GM12878 (cell line): ENCODE measurements at regions of chr6 and their contacts with region 1.

Region 1: GRCh38 chr6:100001915-100002388 is 7.9 kb upstream of the MCHR2 start:
- DNase-seq: no peak
- ATAC-seq: peak; percentile 95
- H3K4me3 ChIP-seq: no peak overlapping the region
- H3K27ac ChIP-seq: no peak overlapping the region
- H3K4me1 ChIP-seq: no peaks in the 10 kb centered on the region
- H3K27me3 ChIP-seq: peaks cover 0 to 4% of the 10 kb centered on the region in 2 experiments; a peak in 1 of 4 replicates
- CTCF ChIP-seq: peak; percentile 87 to 93 (median 91)
- EP300 ChIP-seq: no peak
- POLR2A ChIP-seq: no peak
- RAD21 ChIP-seq: peak; percentile 76

Region 2: GRCh38 chr6:100093405-100093804 is 91.5 kb after region 1 on chr6:
- CTCF ChIA-PET with region 1: interaction called, 103 read pairs
- POLR2A ChIA-PET with region 1: no interaction called
- RAD21 ChIA-PET with region 1: interaction called, 33 read pairs
- SMC1A ChIA-PET with region 1: interaction called, 53 read pairs
- in situ Hi-C with region 1: loop called (anchors 5 kb)
- intact Hi-C with region 1: no loop called
- DNase-seq: no peak
- ATAC-seq: no peak
- H3K4me3 ChIP-seq: no peak overlapping the region
- H3K27ac ChIP-seq: no peak overlapping the region
- H3K4me1 ChIP-seq: no peaks in the 10 kb centered on the region
- H3K27me3 ChIP-seq: no peaks in the 10 kb centered on the region
- CTCF ChIP-seq: no peak
- EP300 ChIP-seq: no peak
- POLR2A ChIP-seq: no peak
- RAD21 ChIP-seq: no peak

Region 3: GRCh38 chr6:100099189-100100074 is 97.5 kb after region 1 on chr6:
- CTCF ChIA-PET with region 1: interaction called, 103 read pairs
- POLR2A ChIA-PET with region 1: no interaction called
- RAD21 ChIA-PET with region 1: interaction called, 33 read pairs
- SMC1A ChIA-PET with region 1: interaction called, 53 read pairs
- in situ Hi-C with region 1: loop called (anchors 5 kb)
- intact Hi-C with region 1: loop called (anchors 1 kb)
- DNase-seq: no peak
- ATAC-seq: peak; percentile 66
- H3K4me3 ChIP-seq: no peak overlapping the region
- H3K27ac ChIP-seq: no peak overlapping the region
- H3K4me1 ChIP-seq: no peaks in the 10 kb centered on the region
- H3K27me3 ChIP-seq: no peaks in the 10 kb centered on the region
- CTCF ChIP-seq: peak in 2 of 3 experiments; percentile 23 to 45; a peak in 4 of 6 replicates
- EP300 ChIP-seq: no peak
- POLR2A ChIP-seq: no peak
- RAD21 ChIP-seq: peak; percentile 42; the same call in 1 of the 2 replicates

Region 4: DNA sequence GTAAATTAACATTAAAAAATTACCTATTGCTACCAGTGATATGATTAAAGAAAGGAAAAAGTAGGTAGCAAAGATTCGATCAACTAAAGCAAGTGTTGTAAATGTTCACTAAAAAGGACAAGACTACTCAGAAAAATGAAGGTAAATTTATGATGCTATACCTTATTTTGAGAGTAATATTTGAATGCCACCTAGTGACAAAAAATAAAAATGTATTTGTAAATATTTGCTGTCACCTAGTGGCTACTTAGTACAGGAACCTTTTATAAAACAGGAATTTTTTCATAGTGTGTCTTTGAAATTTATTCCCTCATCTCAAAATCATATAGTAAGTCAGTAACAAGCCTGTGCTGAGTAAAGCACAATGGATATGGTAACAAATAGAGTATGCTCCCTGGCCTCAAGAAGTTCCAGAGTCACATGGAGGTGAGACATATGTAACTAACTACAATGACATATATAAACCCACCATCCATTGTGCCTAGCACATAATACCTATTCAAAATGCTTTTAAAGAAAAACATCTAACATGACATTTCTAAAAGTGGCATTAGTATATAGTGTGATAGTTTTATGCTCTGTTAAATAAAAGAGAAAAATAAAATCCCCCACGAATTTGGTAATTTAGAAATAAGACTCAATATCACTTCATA is 655.9 kb after region 1 on chr6:
- CTCF ChIA-PET with region 1: interaction called, 9 read pairs
- POLR2A ChIA-PET with region 1: no interaction called
- RAD21 ChIA-PET with region 1: no interaction called
- SMC1A ChIA-PET with region 1: interaction called, 4 read pairs
- in situ Hi-C with region 1: no loop called
- intact Hi-C with region 1: loop called (anchors 5 kb)
- DNase-seq: no peak
- ATAC-seq: peak; percentile 66
- H3K4me3 ChIP-seq: no peak overlapping the region
- H3K27ac ChIP-seq: no peak overlapping the region
- H3K4me1 ChIP-seq: no peaks in the 10 kb centered on the region
- H3K27me3 ChIP-seq: no peaks in the 10 kb centered on the region
- CTCF ChIP-seq: peak; percentile 43 to 78 (median 45); a peak in 3 of 6 replicates
- EP300 ChIP-seq: no peak
- POLR2A ChIP-seq: no peak
- RAD21 ChIP-seq: peak; percentile 61